ENCODE measurements at regions of chr12 and their contacts with region 1.

Region 1: DNA sequence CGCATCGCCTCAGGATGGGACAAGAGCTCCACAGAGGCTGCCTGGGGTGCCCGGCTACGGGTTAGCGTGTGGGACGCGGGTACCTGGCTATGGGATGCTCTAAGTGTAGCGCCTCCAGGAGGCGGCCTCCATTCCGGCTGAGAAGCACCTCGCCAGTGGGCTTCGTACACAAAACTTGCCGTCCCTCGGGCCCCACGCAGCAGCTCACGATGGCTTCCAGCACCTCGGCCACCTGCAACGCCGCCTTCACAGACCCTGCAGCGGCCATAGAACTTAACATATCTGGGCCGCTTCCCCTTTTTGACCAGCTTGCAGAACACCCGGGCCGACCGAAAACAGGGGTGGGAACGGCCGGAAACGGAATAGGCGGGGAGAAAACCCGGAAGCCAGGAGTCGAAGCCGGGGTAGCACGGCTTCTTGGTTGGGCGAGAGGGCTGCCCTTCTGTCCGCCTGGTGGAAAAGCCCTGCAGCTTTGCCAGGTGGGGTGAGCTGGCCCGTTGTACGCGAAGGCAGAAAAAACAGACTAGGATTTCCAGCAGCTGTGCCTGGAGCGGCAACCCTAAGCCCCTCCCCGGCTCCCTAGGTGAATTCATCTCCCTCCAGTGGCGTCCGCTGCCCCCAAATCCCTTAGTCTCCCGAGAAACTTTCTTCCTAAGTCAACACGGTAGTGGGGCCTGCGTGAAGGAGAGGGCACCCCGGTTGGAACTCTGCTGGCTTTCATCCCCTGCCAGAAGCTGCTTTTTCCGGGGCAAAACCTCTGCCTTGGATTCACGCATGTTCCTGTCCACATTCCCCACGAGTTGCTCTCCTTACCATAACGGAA is at the start of gene BBS10:
- DNase-seq: peak; percentile 92
- H3K4me3 ChIP-seq: peak within 1 kb of the TSS; percentile 88
- H3K27ac ChIP-seq: peak within 1 kb of the TSS; percentile 63
- H3K27me3 ChIP-seq: no peaks in the 10 kb centered on the region
- CTCF ChIP-seq: peak; percentile 69

Region 2: GRCh38 chr12:76064904-76065303 is 283.4 kb before region 1 on chr12:
- in situ Hi-C with region 1: no loop called
- DNase-seq: no peak
- H3K4me3 ChIP-seq: no peak overlapping the region
- H3K27ac ChIP-seq: no peak overlapping the region
- H3K27me3 ChIP-seq: no peaks in the 10 kb centered on the region
- CTCF ChIP-seq: no peak

Region 3: GRCh38 chr12:76083904-76084862 is 264.1 kb before region 1 on chr12 and contains the start of gene NAP1L1:
- in situ Hi-C with region 1: loop called (anchors 25 kb)
- DNase-seq: peak; percentile 98
- H3K4me3 ChIP-seq: peak within 1 kb of the TSS; percentile 92
- H3K27ac ChIP-seq: peak within 1 kb of the TSS; percentile 97
- H3K27me3 ChIP-seq: no peaks in the 10 kb centered on the region
- CTCF ChIP-seq: peak; percentile 3